Endothelial cell of umbilical vein (primary cell): ENCODE measurements at regions of chr13 and their contacts with region 1.

Region 1: DNA sequence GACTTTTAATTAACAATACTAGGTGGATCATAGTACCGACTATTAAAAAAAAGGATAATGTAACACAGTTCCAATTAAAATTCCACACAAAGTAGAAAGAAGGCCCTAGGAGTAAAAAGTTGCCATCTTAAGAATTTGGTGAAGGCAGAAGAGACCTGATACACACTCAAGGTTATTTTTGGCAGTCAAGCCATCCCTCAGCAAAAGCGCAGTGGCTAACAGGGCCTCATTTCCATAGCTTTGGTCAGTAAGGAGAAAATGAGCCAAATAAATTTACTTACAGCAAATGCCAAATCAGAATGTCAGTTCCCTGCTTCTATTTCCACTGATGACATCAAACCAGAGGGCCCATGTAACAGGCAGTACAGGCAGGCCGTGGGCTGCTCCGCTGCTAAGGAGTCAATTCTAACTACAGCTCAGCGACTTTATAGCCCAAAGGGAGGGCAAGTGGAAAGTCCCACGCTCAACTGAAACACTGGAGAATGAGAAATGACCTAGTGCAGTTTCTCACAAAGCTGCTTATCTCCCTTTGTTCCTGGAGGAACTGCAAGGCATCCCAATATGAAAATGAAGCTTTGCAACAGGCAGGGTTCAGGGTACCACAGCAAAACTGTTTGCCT is 6.3 kb downstream of the ARGLU1 start:
- DNase-seq: peak; percentile 45
- H3K4me3 ChIP-seq: no peak overlapping the region
- H3K27ac ChIP-seq: no peak overlapping the region
- H3K4me1 ChIP-seq: peaks cover 27% of the 10 kb centered on the region
- H3K27me3 ChIP-seq: no peaks in the 10 kb centered on the region
- CTCF ChIP-seq: no peak
- POLR2A ChIP-seq: no peak

Region 2: DNA sequence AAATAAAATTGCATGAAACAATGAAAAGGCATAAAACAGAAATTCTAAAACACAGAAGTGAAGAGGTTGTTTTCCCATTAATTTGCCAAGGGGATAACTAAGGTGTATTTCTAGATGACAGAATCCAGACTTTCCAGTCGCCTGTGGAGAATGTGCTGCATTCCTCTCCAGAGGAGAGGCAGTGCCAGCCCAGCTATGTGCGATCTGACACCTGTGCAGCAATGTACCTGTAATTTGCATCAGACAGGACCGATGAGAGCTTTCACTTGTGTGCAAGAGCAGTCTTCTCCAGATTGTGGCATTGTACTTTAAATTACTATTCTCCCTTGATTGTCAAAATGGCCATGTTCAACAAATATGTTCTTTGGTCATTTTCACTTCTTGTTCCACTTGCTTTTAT is 1064.1 kb before region 1 on chr13:
- CTCF ChIA-PET with region 1: no interaction called
- POLR2A ChIA-PET with region 1: no interaction called
- dilution Hi-C with region 1: no loop called
- intact Hi-C with region 1: no loop called
- DNase-seq: no peak
- H3K4me3 ChIP-seq: no peak overlapping the region
- H3K27ac ChIP-seq: no peak overlapping the region
- H3K4me1 ChIP-seq: peaks cover 7% of the 10 kb centered on the region
- H3K27me3 ChIP-seq: no peaks in the 10 kb centered on the region
- CTCF ChIP-seq: no peak
- POLR2A ChIP-seq: no peak

Region 3: DNA sequence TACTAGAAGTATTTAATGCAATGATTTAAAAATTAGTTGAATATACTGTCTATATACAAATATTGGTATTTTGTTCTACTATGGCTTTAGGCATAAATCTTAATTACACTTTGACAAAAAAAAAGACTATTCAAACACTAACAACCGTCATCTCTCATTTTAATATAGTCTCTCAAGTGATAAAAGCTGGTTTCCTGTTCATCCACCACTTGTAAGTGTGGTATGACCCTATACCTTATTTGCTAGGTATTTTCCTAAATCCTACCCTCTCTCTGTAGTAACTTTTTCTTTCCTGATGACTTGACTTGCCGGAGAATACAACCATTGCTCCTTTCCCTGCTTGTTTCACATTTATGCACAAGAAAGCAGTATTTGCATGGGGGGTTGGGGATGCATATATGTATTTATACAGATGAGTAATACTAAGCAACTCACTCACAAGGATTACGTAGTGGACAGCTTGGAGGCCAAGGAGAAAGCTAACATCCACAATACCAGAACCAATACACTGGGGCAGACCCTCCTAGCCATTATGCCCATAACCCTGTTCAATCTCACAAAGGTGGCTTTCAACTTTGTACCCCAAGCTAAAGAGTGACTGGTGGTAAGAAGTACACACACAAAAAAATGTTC is 13.5 kb before region 1 on chr13:
- CTCF ChIA-PET with region 1: no interaction called
- POLR2A ChIA-PET with region 1: no interaction called
- dilution Hi-C with region 1: no loop called
- intact Hi-C with region 1: loop called (anchors 2 kb)
- DNase-seq: no peak
- H3K4me3 ChIP-seq: no peak overlapping the region
- H3K27ac ChIP-seq: no peak overlapping the region
- H3K4me1 ChIP-seq: peaks cover 2% of the 10 kb centered on the region
- H3K27me3 ChIP-seq: no peaks in the 10 kb centered on the region
- CTCF ChIP-seq: no peak
- POLR2A ChIP-seq: no peak

Region 4: DNA sequence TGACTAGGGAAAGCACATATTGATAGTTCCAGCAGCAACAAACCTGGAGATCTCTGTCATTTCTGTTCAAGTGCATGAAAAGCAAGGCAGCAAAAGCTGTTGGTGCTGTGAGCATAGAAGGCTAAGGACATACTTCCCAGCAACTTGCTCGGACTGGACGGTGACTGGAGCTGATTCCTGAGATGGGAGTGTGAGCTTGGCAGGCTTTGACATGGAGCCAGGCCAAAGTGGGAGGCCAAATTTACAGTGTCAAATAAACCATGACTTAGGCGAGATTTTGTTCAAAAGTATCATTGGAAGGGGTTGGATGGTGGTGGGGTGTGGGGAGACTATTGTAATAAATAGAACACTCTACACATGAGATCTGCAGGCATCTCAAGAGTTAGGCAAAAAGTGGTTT is 12.2 kb after region 1 on chr13:
- CTCF ChIA-PET with region 1: no interaction called
- POLR2A ChIA-PET with region 1: no interaction called
- dilution Hi-C with region 1: no loop called
- intact Hi-C with region 1: no loop called
- DNase-seq: no peak
- H3K4me3 ChIP-seq: no peak overlapping the region
- H3K27ac ChIP-seq: no peak overlapping the region
- H3K4me1 ChIP-seq: no peaks in the 10 kb centered on the region
- H3K27me3 ChIP-seq: no peaks in the 10 kb centered on the region
- CTCF ChIP-seq: no peak
- POLR2A ChIP-seq: no peak